ENCODE measurements at regions of chr10 and their contacts with region 1.

Region 1: DNA sequence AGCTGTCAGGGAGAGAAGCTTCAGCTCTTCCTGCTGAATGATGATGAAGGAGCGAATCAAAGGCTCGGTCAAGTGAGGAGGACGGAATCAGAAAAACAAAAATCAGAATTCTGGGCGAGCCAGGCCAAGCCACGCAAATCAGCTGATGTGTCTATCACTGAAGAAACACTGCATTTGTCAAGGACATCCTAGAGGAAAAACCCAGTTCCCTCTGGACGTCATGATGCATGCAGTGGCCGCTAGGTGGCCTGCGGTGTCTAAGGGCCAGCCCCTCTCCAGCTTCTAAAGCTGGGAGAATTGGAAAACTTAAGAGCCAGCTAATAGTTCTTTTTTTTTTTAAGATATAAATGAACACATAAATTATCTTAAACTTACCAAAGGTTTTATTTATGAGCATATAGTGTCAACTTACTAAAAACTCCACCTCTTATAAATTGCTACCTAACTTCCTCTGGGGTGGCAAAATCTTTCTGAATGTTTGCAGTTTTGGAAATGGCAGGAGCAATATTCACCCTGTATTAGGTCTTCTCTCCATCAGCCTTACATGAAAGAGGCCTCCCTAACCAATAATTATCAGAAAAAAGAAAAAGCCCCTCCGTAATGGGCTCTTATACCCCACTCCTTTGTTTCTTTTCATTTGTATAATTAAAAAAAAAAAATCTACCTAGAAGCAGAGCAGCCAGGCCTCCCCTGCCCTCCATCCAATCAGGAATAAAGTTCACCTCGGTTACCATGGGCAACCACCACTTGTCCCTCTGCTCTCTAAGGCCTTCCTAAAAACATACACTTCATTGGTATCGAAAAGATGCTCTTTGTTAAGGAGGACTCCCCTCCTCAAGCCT is 186.8 kb downstream of the USP6NL start:
- DNase-seq: peak; percentile 73
- H3K4me3 ChIP-seq: no peak overlapping the region
- H3K27ac ChIP-seq: no peak overlapping the region
- H3K4me1 ChIP-seq: no peaks in the 10 kb centered on the region
- H3K27me3 ChIP-seq: no peaks in the 10 kb centered on the region
- CTCF ChIP-seq: peak; percentile 98

Region 2: DNA sequence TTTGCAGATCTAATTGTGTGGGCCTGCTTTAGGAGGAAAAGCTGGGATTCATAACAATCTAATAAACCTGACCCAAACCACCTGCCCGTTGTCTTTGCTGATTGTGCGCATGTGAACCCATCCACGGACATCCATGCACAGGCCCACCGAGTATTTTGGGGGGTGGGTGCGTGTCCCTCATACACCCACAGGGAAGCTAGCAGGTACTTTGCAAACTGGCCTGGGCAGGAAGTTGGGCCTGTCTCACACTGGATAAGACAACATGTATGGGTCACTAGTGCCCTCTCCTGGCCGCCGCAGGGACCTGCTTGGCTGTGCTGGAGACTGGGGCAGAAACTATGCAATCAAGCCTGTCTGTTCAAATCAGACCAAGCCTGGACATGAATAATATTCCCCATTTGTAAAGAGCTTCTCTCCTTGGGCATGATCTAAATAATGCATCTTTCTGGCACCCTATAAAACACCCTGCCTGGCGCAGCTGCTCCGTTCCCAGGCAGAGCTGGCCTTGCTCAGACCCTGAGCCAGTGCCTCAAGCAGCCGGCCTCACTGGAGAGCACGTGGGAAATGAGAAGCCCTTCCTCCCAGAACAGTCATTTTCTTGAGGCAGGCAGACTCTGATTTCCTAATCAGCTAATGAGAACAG is 333.3 kb after region 1 on chr10:
- CTCF ChIA-PET with region 1: interaction called, 9 read pairs
- POLR2A ChIA-PET with region 1: no interaction called
- intact Hi-C with region 1: loop called (anchors 1 kb)
- DNase-seq: peak; percentile 88
- H3K4me3 ChIP-seq: no peak overlapping the region
- H3K27ac ChIP-seq: peak overlapping the region; percentile 45
- H3K4me1 ChIP-seq: peaks cover 13% of the 10 kb centered on the region
- H3K27me3 ChIP-seq: no peaks in the 10 kb centered on the region
- CTCF ChIP-seq: peak; percentile 94

Measured in A673 (cell line).